HEK293T (cell line): ENCODE measurements at regions of chr12 and their contacts with region 1.

Region 1: GRCh38 chr12:66708704-66709456 is 30.0 kb upstream of the GRIP1 start:
- DNase-seq: no peak

Region 2: DNA sequence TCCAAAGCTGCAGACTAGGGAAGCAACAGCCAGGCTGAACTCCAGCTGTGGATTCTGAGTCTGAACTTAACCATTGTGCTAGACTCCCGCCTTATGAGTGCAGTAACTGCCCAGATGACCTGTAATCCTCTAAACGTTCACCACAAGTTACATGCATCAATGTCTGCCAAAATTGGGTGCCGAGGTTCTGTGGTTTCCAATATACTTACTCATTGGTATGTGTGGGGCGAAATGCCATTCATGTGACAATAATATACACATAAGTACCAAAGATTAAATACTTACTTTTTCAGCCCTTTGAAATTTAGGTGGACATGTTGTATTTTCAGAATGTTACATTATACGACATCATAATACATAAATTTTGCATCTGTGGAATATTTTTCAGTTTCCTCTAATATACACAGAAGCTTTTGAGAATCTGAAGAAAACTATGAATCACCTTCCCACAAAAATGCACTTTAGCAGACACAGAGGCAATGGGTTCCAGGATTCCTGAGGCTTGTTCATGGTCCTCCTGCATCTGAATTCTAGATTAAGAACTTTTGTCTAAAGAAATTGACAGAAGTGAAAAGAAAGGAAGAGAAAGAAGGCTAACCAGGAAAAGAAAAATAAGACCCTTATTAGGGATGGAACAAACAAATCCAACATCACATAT is 61.7 kb before region 1 on chr12:
- CTCF ChIA-PET with region 1: no interaction called
- POLR2A ChIA-PET with region 1: no interaction called
- DNase-seq: no peak

Region 3: GRCh38 chr12:66697404-66697803 is 11.5 kb before region 1 on chr12:
- CTCF ChIA-PET with region 1: interaction called, 10 read pairs
- POLR2A ChIA-PET with region 1: no interaction called
- DNase-seq: no peak

Region 4: DNA sequence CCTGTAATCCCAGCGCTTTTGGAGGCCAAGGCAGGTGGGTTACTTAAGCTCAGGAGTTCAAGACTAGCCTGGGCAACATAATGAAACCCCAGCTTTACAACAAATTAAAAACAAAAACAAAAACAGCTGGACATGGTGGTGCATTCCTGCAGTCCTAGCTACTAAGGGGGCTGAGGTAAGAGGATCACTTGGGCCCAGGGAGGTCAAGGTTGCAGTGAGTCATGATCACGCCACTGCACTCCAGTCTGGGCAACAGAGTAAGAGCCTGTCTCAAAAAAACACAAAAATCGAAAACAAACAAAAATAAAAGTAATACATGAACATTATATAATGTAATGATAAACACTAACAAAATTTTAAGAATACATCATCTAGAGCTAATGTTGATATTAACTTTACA is 16.2 kb after region 1 on chr12:
- CTCF ChIA-PET with region 1: no interaction called
- POLR2A ChIA-PET with region 1: no interaction called
- DNase-seq: no peak